ENCODE measurements at regions of chr2 and their contacts with region 1.

Region 1: GRCh38 chr2:71299507-71299906 is 32.1 kb upstream of the ZNF638 start:
- DNase-seq: no peak
- H3K4me3 ChIP-seq: no peak overlapping the region
- H3K27me3 ChIP-seq: no peaks in the 10 kb centered on the region; the same call in 1 of the 2 replicates
- CTCF ChIP-seq: peak; percentile 65

Region 2: GRCh38 chr2:71235930-71236587 is 63.4 kb before region 1 on chr2:
- CTCF ChIA-PET with region 1: no interaction called
- POLR2A ChIA-PET with region 1: no interaction called
- DNase-seq: no peak
- H3K4me3 ChIP-seq: no peak overlapping the region
- H3K27me3 ChIP-seq: no peaks in the 10 kb centered on the region
- CTCF ChIP-seq: no peak

Region 3: GRCh38 chr2:71276311-71277146 is 23.0 kb before region 1 on chr2:
- CTCF ChIA-PET with region 1: interaction called, 17 read pairs
- POLR2A ChIA-PET with region 1: no interaction called
- DNase-seq: peak; percentile 19
- H3K4me3 ChIP-seq: peak overlapping the region; percentile 50
- H3K27me3 ChIP-seq: no peaks in the 10 kb centered on the region
- CTCF ChIP-seq: 0 out of 2 replicates have a peak, but pooled peaks have one; percentile 17

Region 4: DNA sequence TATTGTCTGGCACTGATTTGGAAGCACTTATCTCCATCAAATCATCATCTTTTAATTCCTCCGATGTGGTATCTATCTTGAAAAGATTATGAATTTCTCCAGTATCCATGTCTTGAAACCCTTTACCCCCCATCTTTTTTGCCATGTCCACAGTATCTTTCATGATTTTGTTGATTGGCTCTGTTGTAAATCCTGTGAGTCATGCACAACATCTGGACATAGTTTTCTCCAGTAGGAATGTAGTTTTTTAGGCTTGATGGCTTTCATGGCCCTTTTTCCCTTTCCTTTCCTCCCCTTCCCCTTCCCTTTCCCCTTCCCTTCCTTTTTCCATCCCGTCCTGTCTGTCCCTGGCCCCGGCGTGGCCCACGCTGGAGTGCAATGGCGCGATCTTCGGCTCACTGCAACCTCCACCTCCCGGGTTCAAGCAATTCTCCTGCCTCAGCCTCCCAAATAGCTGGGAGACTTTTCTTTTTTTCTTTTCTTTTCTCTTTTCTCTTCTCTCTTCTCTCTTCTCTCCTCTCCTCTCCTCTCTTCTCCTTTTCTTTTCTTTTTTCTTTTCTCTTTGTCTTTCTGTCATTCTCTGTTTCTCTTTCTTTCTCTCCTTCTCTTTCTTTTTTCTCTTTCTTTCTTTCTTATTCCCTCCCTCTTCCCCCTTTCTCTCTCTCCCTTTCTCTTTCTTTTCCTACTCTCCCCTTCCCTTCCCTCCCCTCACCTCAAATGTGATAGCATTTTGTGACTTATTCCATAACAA is 13.7 kb after region 1 on chr2:
- CTCF ChIA-PET with region 1: interaction called, 15 read pairs
- POLR2A ChIA-PET with region 1: no interaction called
- DNase-seq: no peak
- H3K4me3 ChIP-seq: no peak overlapping the region
- H3K27me3 ChIP-seq: no peaks in the 10 kb centered on the region
- CTCF ChIP-seq: no peak

Region 5: GRCh38 chr2:71331581-71332434 is 32.3 kb after region 1 on chr2 and contains the start of gene ZNF638:
- CTCF ChIA-PET with region 1: interaction called, 23 read pairs
- POLR2A ChIA-PET with region 1: no interaction called
- DNase-seq: peak; percentile 50
- H3K4me3 ChIP-seq: peak within 1 kb of the TSS; percentile 90
- H3K27me3 ChIP-seq: no peaks in the 10 kb centered on the region
- CTCF ChIP-seq: peak; percentile 73
- polyA plus RNA-seq, gene ZNF638: 44.8 and 75.2 TPM in 2 replicates

Region 6: DNA sequence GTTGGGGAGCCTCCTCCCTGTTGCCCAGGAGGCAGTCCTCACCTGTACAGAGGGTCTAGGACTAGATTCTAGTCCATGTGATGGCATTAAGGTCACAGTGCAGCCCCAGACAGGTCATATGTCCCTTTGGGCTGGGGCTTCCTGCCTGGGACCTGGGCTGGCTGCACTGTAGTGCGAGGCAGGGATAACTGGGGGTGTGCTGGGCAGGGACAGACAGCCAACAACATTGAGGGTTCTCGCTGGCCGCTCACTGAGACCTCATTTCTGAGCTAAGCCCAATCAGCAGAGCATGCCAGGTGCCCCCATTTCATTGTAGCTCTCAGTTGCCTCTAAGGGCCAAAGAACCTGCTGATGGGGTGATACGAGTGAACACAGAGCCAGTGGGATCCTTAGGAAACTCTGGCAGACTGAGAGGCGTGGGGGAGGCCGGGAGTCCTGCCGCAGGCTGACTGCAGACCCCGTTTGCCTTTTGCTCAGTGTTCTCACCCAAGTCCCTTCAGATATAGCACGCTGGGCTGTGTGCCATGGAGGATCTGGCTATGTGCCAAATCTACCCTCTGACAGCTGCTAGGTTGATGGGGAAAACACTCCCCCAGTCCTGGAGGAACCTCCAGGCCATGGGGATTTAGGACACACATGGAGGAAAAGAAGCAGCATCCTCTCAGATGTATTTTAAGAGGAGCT is 205.7 kb after region 1 on chr2:
- CTCF ChIA-PET with region 1: interaction called, 191 read pairs
- POLR2A ChIA-PET with region 1: no interaction called
- DNase-seq: no peak
- H3K4me3 ChIP-seq: no peak overlapping the region
- H3K27me3 ChIP-seq: no peaks in the 10 kb centered on the region; the same call in 1 of the 2 replicates
- CTCF ChIP-seq: no peak

Region 7: DNA sequence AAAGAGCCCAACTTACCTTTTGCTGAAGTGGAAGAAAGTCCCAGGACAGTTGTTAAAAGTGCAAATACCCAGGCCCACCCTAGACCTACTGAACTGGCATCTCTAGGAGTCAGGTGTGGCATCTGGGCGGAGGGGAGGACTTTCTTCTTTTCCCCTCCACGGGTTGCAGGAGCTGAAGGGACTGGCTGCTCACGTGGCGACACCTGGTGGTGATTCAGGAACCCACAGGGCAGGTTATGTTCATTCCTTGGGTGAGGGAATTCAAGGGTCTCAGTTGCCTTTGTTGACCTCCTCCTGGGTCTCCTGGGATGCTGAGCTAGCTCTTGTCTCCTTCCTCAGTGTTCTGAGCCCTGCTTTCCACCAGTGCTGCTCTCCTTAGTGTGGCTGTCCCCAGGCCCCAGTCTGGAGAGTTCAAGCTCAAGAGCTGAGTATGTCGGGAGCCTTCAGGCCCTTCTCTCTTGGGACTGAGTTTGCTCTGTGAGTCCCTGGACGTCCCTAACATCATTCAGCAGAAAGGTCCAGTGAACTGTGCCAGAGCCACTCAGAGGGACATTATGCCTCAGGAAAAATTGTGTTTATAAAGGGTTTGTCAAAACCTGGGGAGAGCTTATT is 210.8 kb after region 1 on chr2:
- CTCF ChIA-PET with region 1: interaction called, 191 read pairs
- POLR2A ChIA-PET with region 1: no interaction called
- DNase-seq: no peak
- H3K4me3 ChIP-seq: no peak overlapping the region
- H3K27me3 ChIP-seq: peaks cover 5% of the 10 kb centered on the region
- CTCF ChIP-seq: peak; percentile 93

Measured in BJ (cell line).